Caco-2 (cell line): ENCODE measurements at regions of chr9 and their contacts with region 1.

Region 1: DNA sequence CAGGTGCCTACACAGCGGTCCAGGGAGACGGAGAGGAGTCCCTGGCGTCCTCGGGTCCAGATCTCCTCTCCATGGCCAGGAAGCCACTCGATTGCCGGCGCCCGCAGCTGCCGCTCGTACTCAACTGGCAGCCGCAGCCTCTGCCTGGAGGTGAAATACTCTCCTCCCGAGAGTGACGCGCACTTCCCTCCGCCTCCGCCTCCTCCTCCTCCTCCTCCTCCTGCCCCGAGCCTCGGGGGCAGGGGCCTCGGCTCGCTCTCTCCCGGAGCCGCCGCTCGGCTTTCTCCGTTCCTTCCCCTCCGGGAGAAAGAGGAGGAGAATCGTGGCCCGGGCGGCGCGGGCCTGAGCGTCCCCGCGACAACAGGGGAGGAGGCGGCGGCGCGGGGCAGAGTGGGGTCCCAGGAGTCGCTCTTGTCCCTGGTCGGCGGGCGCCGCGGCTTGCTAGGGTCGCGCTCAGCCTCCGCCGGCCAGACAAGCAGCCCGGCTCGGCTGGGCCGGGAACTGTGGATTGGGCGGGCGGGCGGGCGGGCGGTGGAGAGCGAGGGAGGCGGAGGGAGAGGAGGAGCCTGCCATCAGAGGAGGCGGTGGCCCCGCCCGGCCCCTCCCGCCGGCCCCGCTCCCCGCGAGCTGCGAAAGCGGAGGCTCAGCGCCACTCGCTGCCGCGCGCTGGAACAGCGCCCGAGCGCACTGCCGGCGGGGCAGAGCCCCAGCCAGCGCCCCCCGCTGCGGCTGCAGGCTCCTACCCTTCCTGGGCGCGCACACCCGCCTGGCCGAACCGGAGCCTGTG is at the start of gene CEMIP2:
- DNase-seq: peak; percentile 74
- H3K4me3 ChIP-seq: peak within 1 kb of the TSS; percentile 54
- H3K4me3 Mint-ChIP-seq: peak within 1 kb of the TSS; percentile 89
- H3K27ac Mint-ChIP-seq: peak within 1 kb of the TSS; percentile 59
- H3K4me1 ChIP-seq: peaks cover under 1% of the 10 kb centered on the region; the same call in 1 of the 2 replicates
- H3K4me1 Mint-ChIP-seq: no peaks in the 10 kb centered on the region
- H3K27me3 ChIP-seq: no peaks in the 10 kb centered on the region
- H3K27me3 Mint-ChIP-seq: no peaks in the 10 kb centered on the region
- CTCF ChIP-seq: no peak
- total RNA-seq, gene CEMIP2: 28.4 and 37.2 TPM in 2 replicates

Region 2: GRCh38 chr9:71490810-71491209 is 277.8 kb before region 1 on chr9:
- CTCF ChIA-PET with region 1: no interaction called
- POLR2A ChIA-PET with region 1: no interaction called
- intact Hi-C with region 1: loop called (anchors 2 kb)
- DNase-seq: no peak
- H3K4me3 ChIP-seq: no peak overlapping the region
- H3K4me3 Mint-ChIP-seq: no peak overlapping the region
- H3K27ac Mint-ChIP-seq: no peak overlapping the region
- H3K4me1 ChIP-seq: no peaks in the 10 kb centered on the region
- H3K4me1 Mint-ChIP-seq: no peaks in the 10 kb centered on the region
- H3K27me3 ChIP-seq: no peaks in the 10 kb centered on the region
- H3K27me3 Mint-ChIP-seq: peaks cover 3% of the 10 kb centered on the region
- CTCF ChIP-seq: no peak

Region 3: GRCh38 chr9:71504636-71505035 is 263.9 kb before region 1 on chr9:
- CTCF ChIA-PET with region 1: no interaction called
- POLR2A ChIA-PET with region 1: no interaction called
- intact Hi-C with region 1: no loop called
- DNase-seq: no peak
- H3K4me3 ChIP-seq: no peak overlapping the region
- H3K4me3 Mint-ChIP-seq: no peak overlapping the region
- H3K27ac Mint-ChIP-seq: no peak overlapping the region
- H3K4me1 ChIP-seq: no peaks in the 10 kb centered on the region
- H3K4me1 Mint-ChIP-seq: no peaks in the 10 kb centered on the region
- H3K27me3 ChIP-seq: no peaks in the 10 kb centered on the region
- H3K27me3 Mint-ChIP-seq: peaks cover 2% of the 10 kb centered on the region
- CTCF ChIP-seq: no peak

Region 4: GRCh38 chr9:71604197-71605063 is 164.2 kb before region 1 on chr9:
- CTCF ChIA-PET with region 1: no interaction called
- POLR2A ChIA-PET with region 1: no interaction called
- intact Hi-C with region 1: loop called (anchors 1 kb)
- DNase-seq: peak; percentile 43 to 58
- H3K4me3 ChIP-seq: no peak overlapping the region
- H3K4me3 Mint-ChIP-seq: no peak overlapping the region
- H3K27ac Mint-ChIP-seq: no peak overlapping the region
- H3K4me1 ChIP-seq: no peaks in the 10 kb centered on the region
- H3K4me1 Mint-ChIP-seq: no peaks in the 10 kb centered on the region
- H3K27me3 ChIP-seq: no peaks in the 10 kb centered on the region
- H3K27me3 Mint-ChIP-seq: no peaks in the 10 kb centered on the region
- CTCF ChIP-seq: peak; percentile 28 to 31

Region 5: GRCh38 chr9:71725590-71726338 is 42.8 kb before region 1 on chr9:
- CTCF ChIA-PET with region 1: no interaction called
- POLR2A ChIA-PET with region 1: interaction called, 3 read pairs
- intact Hi-C with region 1: loop called (anchors 5 kb)
- DNase-seq: peak; percentile 17 to 34
- H3K4me3 ChIP-seq: no peak overlapping the region
- H3K4me3 Mint-ChIP-seq: no peak overlapping the region
- H3K27ac Mint-ChIP-seq: no peak overlapping the region
- H3K4me1 ChIP-seq: no peaks in the 10 kb centered on the region
- H3K4me1 Mint-ChIP-seq: no peaks in the 10 kb centered on the region
- H3K27me3 ChIP-seq: no peaks in the 10 kb centered on the region
- H3K27me3 Mint-ChIP-seq: no peaks in the 10 kb centered on the region
- CTCF ChIP-seq: no peak

Region 6: GRCh38 chr9:71741711-71742648 is 26.6 kb before region 1 on chr9:
- CTCF ChIA-PET with region 1: interaction called, 6 read pairs
- POLR2A ChIA-PET with region 1: no interaction called
- intact Hi-C with region 1: loop called (anchors 2 kb)
- DNase-seq: peak; percentile 38 to 42
- H3K4me3 ChIP-seq: no peak overlapping the region
- H3K4me3 Mint-ChIP-seq: peak overlapping the region; percentile 36
- H3K27ac Mint-ChIP-seq: peak overlapping the region; percentile 57
- H3K4me1 ChIP-seq: peaks cover 13% of the 10 kb centered on the region
- H3K4me1 Mint-ChIP-seq: no peaks in the 10 kb centered on the region
- H3K27me3 ChIP-seq: no peaks in the 10 kb centered on the region
- H3K27me3 Mint-ChIP-seq: no peaks in the 10 kb centered on the region
- CTCF ChIP-seq: no peak